CD4-positive, alpha-beta memory T cell (primary cell): ENCODE measurements at regions of chr15 and their contacts with region 1.

Region 1: GRCh38 chr15:63752075-63752684 is 81.6 kb downstream of the HERC1 start:
- DNase-seq: peak; percentile 44 to 66 (median 56)
- H3K4me3 ChIP-seq: no peak overlapping the region
- H3K4me3 Mint-ChIP-seq: no peak overlapping the region
- H3K27ac ChIP-seq: no peak overlapping the region
- H3K27ac Mint-ChIP-seq: peak overlapping the region in 4 of 7 donors; percentile 4 to 80 (median 56)
- H3K4me1 ChIP-seq: no peaks in the 10 kb centered on the region
- H3K4me1 Mint-ChIP-seq: peaks cover 0 to 3% (median 0%) of the 10 kb centered on the region in 4 donors
- H3K27me3 ChIP-seq: no peaks in the 10 kb centered on the region
- H3K27me3 Mint-ChIP-seq: no peaks in the 10 kb centered on the region

Region 2: GRCh38 chr15:63763476-63764123 is 11.4 kb after region 1 on chr15:
- CTCF ChIA-PET with region 1: interaction called, 18 read pairs
- POLR2A ChIA-PET with region 1: no interaction called
- intact Hi-C with region 1: no loop called
- DNase-seq: peak in 3 of 5 donors; percentile 22 to 33 (median 25)
- H3K4me3 ChIP-seq: no peak overlapping the region
- H3K4me3 Mint-ChIP-seq: peak overlapping the region in 3 of 8 donors; percentile 8 to 55 (median 20)
- H3K27ac ChIP-seq: no peak overlapping the region
- H3K27ac Mint-ChIP-seq: peak overlapping the region in 2 of 7 donors; percentile 14 to 59
- H3K4me1 ChIP-seq: peaks cover 42% of the 10 kb centered on the region
- H3K4me1 Mint-ChIP-seq: peaks cover 42 to 59% (median 52%) of the 10 kb centered on the region in 4 donors
- H3K27me3 ChIP-seq: no peaks in the 10 kb centered on the region
- H3K27me3 Mint-ChIP-seq: no peaks in the 10 kb centered on the region

Region 3: GRCh38 chr15:63805993-63806980 is 54.1 kb after region 1 on chr15:
- CTCF ChIA-PET with region 1: interaction called, 5 read pairs
- POLR2A ChIA-PET with region 1: no interaction called
- intact Hi-C with region 1: loop called (anchors 10 kb)
- DNase-seq: no peak
- H3K4me3 ChIP-seq: no peak overlapping the region
- H3K4me3 Mint-ChIP-seq: peak overlapping the region in 7 of 8 donors; percentile 3 to 66 (median 17)
- H3K27ac ChIP-seq: no peak overlapping the region
- H3K27ac Mint-ChIP-seq: peak overlapping the region; percentile 3 to 78 (median 50)
- H3K4me1 ChIP-seq: peaks cover 89% of the 10 kb centered on the region
- H3K4me1 Mint-ChIP-seq: peaks cover 65 to 96% (median 75%) of the 10 kb centered on the region in 4 donors
- H3K27me3 ChIP-seq: no peaks in the 10 kb centered on the region
- H3K27me3 Mint-ChIP-seq: no peaks in the 10 kb centered on the region

Region 4: GRCh38 chr15:64046347-64047153 is 294.4 kb after region 1 on chr15 and contains the start of gene DAPK2:
- CTCF ChIA-PET with region 1: interaction called, 91 read pairs
- POLR2A ChIA-PET with region 1: interaction called, 11 read pairs
- intact Hi-C with region 1: loop called (anchors 1 kb)
- DNase-seq: peak; percentile 60 to 76 (median 64)
- H3K4me3 ChIP-seq: peak within 1 kb of the TSS; percentile 43 to 51
- H3K4me3 Mint-ChIP-seq: peak within 1 kb of the TSS; percentile 75 to 91 (median 78)
- H3K27ac ChIP-seq: no peak within 1 kb of the TSS
- H3K27ac Mint-ChIP-seq: peak within 1 kb of the TSS in 6 of 7 donors; percentile 13 to 87 (median 72)
- H3K4me1 ChIP-seq: peaks cover 12% of the 10 kb centered on the region
- H3K4me1 Mint-ChIP-seq: peaks cover 4 to 10% (median 5%) of the 10 kb centered on the region in 4 donors
- H3K27me3 ChIP-seq: no peaks in the 10 kb centered on the region
- H3K27me3 Mint-ChIP-seq: peaks cover 6 to 8% of the 10 kb centered on the region in 2 donors
- total RNA-seq, gene DAPK2: 2.3 to 2.9 TPM

Region 5: DNA sequence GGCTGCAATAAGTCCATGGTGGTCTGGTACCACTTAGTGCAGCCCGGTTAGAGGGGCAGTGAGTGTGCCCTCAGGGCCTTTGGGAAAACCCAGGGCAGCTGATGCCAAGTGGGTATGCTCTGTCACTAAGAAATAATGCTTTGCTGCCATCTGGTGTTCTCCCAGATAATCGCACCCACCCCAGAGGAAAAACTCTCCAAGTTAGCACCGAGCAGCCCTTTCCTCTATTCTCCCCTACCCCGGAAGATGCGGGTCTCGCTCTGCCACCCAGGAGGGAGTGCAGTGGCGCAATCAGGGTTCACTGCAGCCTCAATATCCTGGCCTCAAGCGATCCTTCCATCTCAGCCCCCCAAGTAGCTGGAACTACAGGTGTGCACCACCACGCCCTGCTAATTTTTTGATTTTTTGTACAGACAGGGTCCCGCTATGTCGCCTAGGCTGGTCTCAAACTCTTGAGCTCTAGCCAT is 315.4 kb after region 1 on chr15:
- CTCF ChIA-PET with region 1: interaction called, 138 read pairs
- POLR2A ChIA-PET with region 1: interaction called, 5 read pairs
- intact Hi-C with region 1: loop called (anchors 1 kb)
- DNase-seq: peak; percentile 65 to 73 (median 66)
- H3K4me3 ChIP-seq: no peak overlapping the region
- H3K4me3 Mint-ChIP-seq: no peak overlapping the region
- H3K27ac ChIP-seq: no peak overlapping the region
- H3K27ac Mint-ChIP-seq: peak overlapping the region in 3 of 7 donors; percentile 43 to 77 (median 66)
- H3K4me1 ChIP-seq: peaks cover 9% of the 10 kb centered on the region
- H3K4me1 Mint-ChIP-seq: peaks cover 4 to 8% (median 5%) of the 10 kb centered on the region in 4 donors
- H3K27me3 ChIP-seq: no peaks in the 10 kb centered on the region
- H3K27me3 Mint-ChIP-seq: no peaks in the 10 kb centered on the region